A673 (cell line): ENCODE measurements at regions of chr10 and their contacts with region 1.

Region 1: DNA sequence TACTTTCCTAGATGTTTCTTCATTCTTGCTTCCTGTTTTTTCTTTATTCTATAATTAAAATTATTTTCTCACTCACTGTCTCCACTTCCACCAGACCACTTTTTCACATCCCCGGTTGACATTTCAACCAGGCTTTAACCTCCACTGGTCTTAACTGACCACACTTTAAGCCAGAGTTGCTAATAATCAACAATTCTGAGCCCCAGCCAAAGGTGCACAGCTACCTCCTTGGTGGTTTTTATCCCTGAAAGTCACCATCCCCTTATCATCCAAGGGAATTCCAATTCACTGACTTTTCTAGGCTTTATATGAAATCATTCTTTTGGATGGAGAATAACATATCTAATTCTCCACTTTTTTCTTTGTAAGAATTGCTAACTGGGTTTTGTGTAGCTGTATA is 138.9 kb downstream of the FRMD4A start:
- DNase-seq: no peak
- H3K4me3 ChIP-seq: no peak overlapping the region
- H3K27ac ChIP-seq: no peak overlapping the region
- H3K4me1 ChIP-seq: no peaks in the 10 kb centered on the region
- H3K27me3 ChIP-seq: peaks cover 8% of the 10 kb centered on the region
- CTCF ChIP-seq: no peak

Region 2: DNA sequence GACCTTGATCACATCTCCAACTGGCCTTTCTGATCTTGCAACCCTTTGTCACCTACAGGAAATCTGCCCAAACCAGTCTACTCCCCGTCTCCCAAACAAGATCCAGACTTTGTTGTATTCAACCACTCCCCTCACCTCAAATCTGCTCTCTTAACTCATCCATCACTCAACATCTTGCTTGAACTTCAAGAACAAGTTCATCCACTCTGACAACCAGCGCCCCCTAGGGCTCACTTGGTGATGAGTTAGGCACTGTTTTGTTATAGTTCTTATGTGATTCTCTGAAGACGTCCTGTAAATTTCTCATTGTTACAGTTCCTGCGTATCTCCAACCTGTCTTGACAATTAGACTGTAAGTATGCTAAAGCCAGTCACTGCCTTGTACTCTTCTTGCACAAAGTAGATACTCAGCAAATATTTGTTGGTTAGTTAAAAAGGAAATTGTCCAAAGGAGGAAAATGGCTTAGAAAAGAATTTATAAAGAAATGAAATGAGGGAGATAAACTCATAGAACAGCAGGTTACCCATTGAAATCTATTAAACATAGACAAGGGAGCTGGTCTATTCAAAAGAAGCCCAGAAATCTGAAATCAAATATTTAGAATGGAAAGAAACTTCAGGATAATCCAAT is 133.6 kb after region 1 on chr10:
- CTCF ChIA-PET with region 1: no interaction called
- POLR2A ChIA-PET with region 1: no interaction called
- intact Hi-C with region 1: loop called (anchors 10 kb)
- DNase-seq: peak; percentile 69
- H3K4me3 ChIP-seq: no peak overlapping the region
- H3K27ac ChIP-seq: no peak overlapping the region
- H3K4me1 ChIP-seq: peaks cover 26% of the 10 kb centered on the region
- H3K27me3 ChIP-seq: peaks cover 4% of the 10 kb centered on the region
- CTCF ChIP-seq: peak; percentile 74

Region 3: DNA sequence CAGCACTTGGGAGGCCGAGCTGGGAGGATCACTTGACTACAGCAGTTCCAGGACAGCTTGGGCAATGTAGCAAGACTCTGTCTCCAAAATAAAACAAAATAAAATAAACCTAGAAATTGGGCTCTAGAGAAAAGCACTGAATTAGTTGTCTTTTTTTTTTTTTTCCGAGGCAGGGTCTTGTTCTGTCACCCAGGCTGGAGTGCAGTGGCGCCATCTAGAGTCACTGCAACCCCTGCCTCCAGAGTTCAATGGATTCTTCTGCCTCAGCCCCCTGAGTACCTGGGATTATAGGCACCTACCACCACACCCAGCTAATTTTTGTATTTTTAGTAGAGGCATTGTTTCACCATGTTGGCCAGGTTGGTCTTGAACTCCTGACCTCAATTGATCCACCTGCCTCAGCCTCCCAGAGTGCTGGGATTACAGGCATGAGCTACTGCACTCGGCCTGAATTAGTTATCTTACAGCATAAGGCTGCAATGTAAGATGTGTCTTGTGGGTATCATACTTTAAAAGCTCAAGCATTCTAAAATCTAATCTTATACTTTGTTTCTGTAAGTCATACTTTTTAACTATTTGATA is 780.1 kb after region 1 on chr10:
- CTCF ChIA-PET with region 1: no interaction called
- POLR2A ChIA-PET with region 1: no interaction called
- intact Hi-C with region 1: loop called (anchors 10 kb)
- DNase-seq: peak; percentile 46
- H3K4me3 ChIP-seq: no peak overlapping the region
- H3K27ac ChIP-seq: no peak overlapping the region
- H3K4me1 ChIP-seq: no peaks in the 10 kb centered on the region
- H3K27me3 ChIP-seq: no peaks in the 10 kb centered on the region
- CTCF ChIP-seq: peak; percentile 80